Brain microvascular endothelial cell (primary cell): ENCODE measurements at regions of chr12 and their contacts with region 1.

Region 1: DNA sequence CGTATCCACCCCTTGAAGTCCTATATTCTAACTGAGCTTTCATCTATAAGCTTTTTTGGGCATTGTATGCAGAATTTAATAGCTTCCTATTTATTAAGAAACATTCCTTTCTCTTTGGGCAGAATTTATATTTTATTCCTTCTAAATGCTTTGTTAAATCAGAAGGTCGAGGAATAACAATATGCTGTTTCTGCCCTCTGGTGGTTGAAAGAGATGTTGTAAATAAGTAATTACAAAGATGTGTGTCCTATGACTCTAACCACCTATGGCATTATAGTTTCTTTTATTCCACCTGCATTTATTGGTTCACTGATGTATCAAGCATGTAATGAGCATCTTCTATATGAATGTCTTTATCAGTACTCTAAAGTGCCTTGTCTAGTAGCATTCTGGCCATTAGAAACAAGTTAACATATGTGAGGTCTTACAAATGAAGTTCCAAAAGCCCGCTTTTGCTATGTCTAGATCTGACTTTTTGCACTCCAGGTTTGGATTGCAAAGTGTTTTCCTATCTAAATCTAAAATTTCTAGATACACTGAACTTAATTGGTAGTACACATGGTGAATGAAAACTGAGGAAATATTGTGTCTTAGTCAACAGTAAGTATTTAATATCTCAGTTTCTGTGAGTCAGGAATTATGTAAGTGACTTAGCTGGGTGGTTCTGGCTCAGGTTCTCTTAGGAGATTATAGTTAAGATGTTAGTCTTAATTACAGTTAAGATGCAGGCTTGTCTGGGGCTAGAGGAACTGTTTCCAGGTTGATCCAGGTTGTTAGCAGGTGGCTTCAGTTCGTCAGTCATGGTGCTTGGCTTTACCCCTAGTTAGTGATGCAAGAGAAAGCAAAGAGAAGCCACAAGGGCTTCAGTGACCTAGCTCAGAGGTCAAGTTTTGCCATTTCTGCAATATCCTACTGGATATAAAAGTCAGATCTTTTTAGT is 57.5 kb downstream of the PLEKHA5 start:
- DNase-seq: no peak
- H3K4me3 ChIP-seq: no peak overlapping the region
- H3K27ac ChIP-seq: no peak overlapping the region
- H3K27me3 ChIP-seq: no peaks in the 10 kb centered on the region
- CTCF ChIP-seq: peak; percentile 56

Region 2: DNA sequence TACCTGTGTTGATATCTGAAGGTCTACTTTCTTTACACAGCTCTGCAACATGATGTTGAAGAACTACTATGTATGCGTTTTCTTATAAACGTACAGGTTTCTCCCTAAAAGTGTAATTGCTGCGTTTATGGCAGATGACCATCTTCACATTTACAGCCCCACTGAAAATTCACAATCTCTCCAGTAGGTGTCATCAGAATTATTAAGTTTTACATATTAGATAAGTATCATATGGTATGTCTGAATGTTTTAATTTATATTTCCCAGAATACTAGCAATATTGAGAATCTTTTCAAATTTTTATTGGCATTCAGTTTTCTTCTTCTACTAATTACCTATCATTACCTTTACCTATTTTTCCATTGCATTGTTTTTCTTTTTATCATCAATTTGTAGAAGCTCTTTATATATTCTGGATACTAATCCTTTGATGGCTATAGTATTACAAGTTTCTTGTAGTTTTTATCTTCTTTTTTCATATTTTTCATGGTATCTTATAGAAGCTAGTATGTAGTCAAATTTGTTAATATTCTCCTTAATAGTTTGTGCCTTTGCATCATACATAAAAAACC is 325.6 kb before region 1 on chr12:
- in situ Hi-C with region 1: loop called (anchors 25 kb)
- DNase-seq: no peak
- H3K4me3 ChIP-seq: no peak overlapping the region
- H3K27ac ChIP-seq: no peak overlapping the region
- H3K27me3 ChIP-seq: no peaks in the 10 kb centered on the region
- CTCF ChIP-seq: peak; percentile 47